IMR-90 (cell line): ENCODE measurements at regions of chr13 and their contacts with region 1.

Region 1: DNA sequence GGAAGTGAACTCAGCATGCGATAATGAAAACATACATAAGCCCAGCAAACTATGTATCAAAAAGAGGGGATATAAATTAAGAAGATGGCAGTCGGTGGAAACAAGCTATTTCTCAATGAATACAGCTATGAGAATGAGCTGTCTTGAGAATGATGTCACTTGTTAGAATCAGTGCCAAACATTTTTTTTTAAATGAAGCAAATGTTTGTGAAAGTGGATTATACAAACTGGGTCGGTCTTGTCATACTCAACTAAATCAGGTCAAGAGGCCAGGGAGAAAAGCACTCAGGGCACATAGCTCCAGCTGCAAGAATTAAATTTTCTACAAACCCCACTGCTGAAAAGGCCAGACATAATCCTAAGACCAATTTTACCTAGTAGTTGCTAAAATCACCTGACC is 1048.4 kb downstream of the SLITRK1 start:
- DNase-seq: peak; percentile 34
- ATAC-seq: peak; percentile 72
- H3K4me3 ChIP-seq: no peak overlapping the region
- H3K27ac ChIP-seq: no peak overlapping the region
- H3K4me1 ChIP-seq: no peaks in the 10 kb centered on the region
- H3K27me3 ChIP-seq: no peaks in the 10 kb centered on the region
- CTCF ChIP-seq: no peak
- POLR2A ChIP-seq: no peak
- RAD21 ChIP-seq: no peak

Region 2: GRCh38 chr13:82800391-82800790 is 33.5 kb before region 1 on chr13:
- CTCF ChIA-PET with region 1: interaction called, 10 read pairs
- POLR2A ChIA-PET with region 1: no interaction called
- dilution Hi-C with region 1: no loop called
- in situ Hi-C with region 1: no loop called
- intact Hi-C with region 1: no loop called
- DNase-seq: no peak
- ATAC-seq: no peak
- H3K4me3 ChIP-seq: no peak overlapping the region
- H3K27ac ChIP-seq: no peak overlapping the region
- H3K4me1 ChIP-seq: no peaks in the 10 kb centered on the region
- H3K27me3 ChIP-seq: no peaks in the 10 kb centered on the region
- CTCF ChIP-seq: no peak
- POLR2A ChIP-seq: no peak
- RAD21 ChIP-seq: no peak